Mucosa of descending colon (tissue), 3 donors: ENCODE measurements at regions of chr9 and their contacts with region 1.

Region 1: DNA sequence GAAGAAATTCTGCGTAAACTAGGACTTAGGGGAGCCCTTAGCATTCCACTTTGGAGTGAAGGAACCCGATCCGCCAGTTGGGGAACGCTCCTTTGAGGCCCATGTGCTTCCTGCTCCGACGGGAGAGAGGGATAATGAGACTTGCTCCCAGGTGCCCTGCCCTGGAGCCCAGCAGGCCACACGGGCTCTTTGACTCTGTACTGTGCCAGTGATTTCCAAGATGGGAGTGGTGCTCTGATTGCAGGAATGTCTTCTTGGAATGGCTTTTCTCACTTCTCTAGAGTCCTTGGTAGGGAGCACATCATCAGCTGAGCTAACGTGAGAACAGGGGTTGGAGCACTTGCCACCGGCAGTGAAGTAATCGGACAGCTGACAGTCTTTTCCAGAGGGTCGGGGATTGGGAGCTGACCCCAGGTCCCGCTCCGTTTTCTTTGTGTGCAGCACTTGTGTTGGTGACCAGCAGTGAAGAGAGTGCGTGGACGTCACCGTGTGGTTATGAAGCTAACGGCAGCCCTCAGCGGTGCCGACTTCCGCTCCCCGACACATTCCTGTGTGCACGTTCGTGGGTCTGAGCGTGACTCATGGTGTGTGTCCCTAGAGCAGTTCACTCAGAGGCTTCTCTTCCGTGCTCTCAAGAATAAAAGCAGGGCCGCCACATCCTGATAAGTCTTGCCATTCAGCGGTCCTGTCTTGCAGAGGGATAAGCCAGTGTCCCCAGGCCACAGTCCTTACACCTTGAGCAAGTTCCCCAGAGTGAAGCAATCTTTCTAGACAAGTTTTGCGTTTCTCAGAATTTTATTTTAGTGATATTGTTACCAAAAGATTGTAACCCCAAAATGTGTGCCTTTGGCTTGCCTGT is 25.6 kb downstream of the ABL1 start:
- DNase-seq: peak; percentile 48 to 66 (median 51)
- ATAC-seq: peak; percentile 59
- H3K4me3 ChIP-seq: no peak overlapping the region
- H3K4me1 ChIP-seq: no peaks in the 10 kb centered on the region
- CTCF ChIP-seq: no peak

Region 2: GRCh38 chr9:130707225-130707976 is 153.3 kb before region 1 on chr9:
- intact Hi-C with region 1: loop called (anchors 5 kb)
- DNase-seq: peak in 1 of 3 donors; percentile 86
- ATAC-seq: peak; percentile 62
- H3K4me3 ChIP-seq: no peak overlapping the region
- H3K4me1 ChIP-seq: peaks cover 6% of the 10 kb centered on the region
- CTCF ChIP-seq: peak; percentile 32